Ovary (tissue), 10 donors: ENCODE measurements at regions of chr9 and their contacts with region 1.

Region 1: GRCh38 chr9:81305561-81306182 is 383.7 kb downstream of the TLE1 start:
- DNase-seq: no peak
- H3K4me3 ChIP-seq: no peak overlapping the region
- H3K27ac ChIP-seq: no peak overlapping the region
- H3K4me1 ChIP-seq: no peaks in the 10 kb centered on the region
- H3K27me3 ChIP-seq: no peaks in the 10 kb centered on the region
- CTCF ChIP-seq: no peak
- EP300 ChIP-seq: no peak
- POLR2A ChIP-seq: no peak

Region 2: DNA sequence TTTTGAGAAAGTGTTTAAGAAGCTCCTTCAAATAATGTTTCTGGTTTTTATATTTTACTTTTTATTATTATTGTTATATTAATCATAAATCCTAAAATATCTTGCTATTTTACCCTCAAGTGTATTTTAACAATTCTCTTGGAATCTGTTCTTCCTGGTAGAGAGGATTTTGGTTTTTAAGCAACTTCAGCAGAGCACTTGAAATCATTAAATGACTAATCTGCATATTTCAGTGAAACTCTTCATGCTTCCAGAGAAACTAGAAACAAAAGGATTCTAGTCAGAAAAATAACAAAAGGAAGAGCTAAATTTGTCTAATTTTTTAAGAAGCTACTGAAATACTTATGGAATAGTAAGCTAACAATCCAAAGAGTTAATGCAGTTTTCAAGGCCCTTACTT is 673.6 kb before region 1 on chr9:
- intact Hi-C with region 1: loop called in 1 of 4 experiments (anchors 5 kb)
- DNase-seq: no peak
- H3K4me3 ChIP-seq: no peak overlapping the region
- H3K27ac ChIP-seq: no peak overlapping the region
- H3K4me1 ChIP-seq: no peaks in the 10 kb centered on the region
- H3K27me3 ChIP-seq: no peaks in the 10 kb centered on the region
- CTCF ChIP-seq: no peak
- EP300 ChIP-seq: no peak
- POLR2A ChIP-seq: no peak